Adrenal gland (tissue), 19 donors: ENCODE measurements at regions of chr9 and their contacts with region 1.

Region 1: GRCh38 chr9:137762414-137763061 is 115.0 kb upstream of the CACNA1B start:
- DNase-seq: peak in 3 of 7 donors; percentile 22 to 69 (median 51)
- H3K4me3 ChIP-seq: no peak overlapping the region
- H3K27ac ChIP-seq: peak overlapping the region; percentile 33 to 88 (median 83)
- H3K4me1 ChIP-seq: peaks cover 24 to 27% of the 10 kb centered on the region in 2 donors
- H3K27me3 ChIP-seq: no peaks in the 10 kb centered on the region
- CTCF ChIP-seq: no peak
- POLR2A ChIP-seq: no peak

Region 2: GRCh38 chr9:137672907-137673791 is 89.4 kb before region 1 on chr9:
- intact Hi-C with region 1: loop called in 1 of 2 experiments (anchors 10 kb)
- DNase-seq: peak in 6 of 7 donors; percentile 52 to 80 (median 70)
- H3K4me3 ChIP-seq: no peak overlapping the region
- H3K27ac ChIP-seq: peak overlapping the region in 3 of 5 donors; percentile 29 to 67 (median 59)
- H3K4me1 ChIP-seq: peaks cover 33 to 49% of the 10 kb centered on the region in 2 donors
- H3K27me3 ChIP-seq: no peaks in the 10 kb centered on the region
- CTCF ChIP-seq: peak; percentile 78 to 90 (median 83)
- POLR2A ChIP-seq: no peak